Breast epithelium (tissue), 4 donors: ENCODE measurements at regions of chr17 and their contacts with region 1.

Region 1: GRCh38 chr17:63275318-63275970 is 170.7 kb downstream of the CYB561 start:
- DNase-seq: no peak
- H3K4me3 ChIP-seq: no peak overlapping the region
- H3K27ac ChIP-seq: no peak overlapping the region
- H3K4me1 ChIP-seq: no peaks in the 10 kb centered on the region
- H3K27me3 ChIP-seq: no peaks in the 10 kb centered on the region
- CTCF ChIP-seq: no peak
- POLR2A ChIP-seq: no peak

Region 2: DNA sequence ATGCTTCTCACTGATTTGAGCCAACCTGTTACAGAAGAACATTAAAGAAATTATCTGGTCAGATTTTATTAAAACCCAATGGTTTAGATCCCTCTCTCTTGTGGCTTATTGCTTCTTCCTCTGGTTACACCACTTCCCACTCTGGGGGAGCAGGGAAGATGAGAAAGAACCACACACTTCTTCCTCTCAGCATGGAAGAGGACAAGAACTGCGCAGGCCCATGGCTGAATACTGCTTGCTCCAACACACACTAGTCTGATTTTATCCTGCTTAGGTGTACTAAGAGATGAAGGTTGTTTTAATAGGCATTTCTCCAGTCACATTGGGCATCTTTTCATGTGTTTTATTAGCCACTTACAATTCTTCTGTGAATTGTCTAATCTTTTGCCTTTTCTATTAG is 374.4 kb after region 1 on chr17:
- intact Hi-C with region 1: loop called (anchors 10 kb)
- DNase-seq: no peak
- H3K4me3 ChIP-seq: no peak overlapping the region
- H3K27ac ChIP-seq: no peak overlapping the region
- H3K4me1 ChIP-seq: peaks cover 0 to 12% of the 10 kb centered on the region in 2 donors
- H3K27me3 ChIP-seq: no peaks in the 10 kb centered on the region
- CTCF ChIP-seq: no peak
- POLR2A ChIP-seq: no peak